Mammary epithelial cell (primary cell): ENCODE measurements at regions of chr19 and their contacts with region 1.

Region 1: GRCh38 chr19:39170395-39171231 is 26.2 kb upstream of the NCCRP1 start:
- DNase-seq: no peak
- H3K4me3 ChIP-seq: no peak overlapping the region
- H3K27ac ChIP-seq: no peak overlapping the region
- H3K4me1 ChIP-seq: peaks cover 19% of the 10 kb centered on the region
- H3K27me3 ChIP-seq: no peaks in the 10 kb centered on the region
- CTCF ChIP-seq: no peak

Region 2: DNA sequence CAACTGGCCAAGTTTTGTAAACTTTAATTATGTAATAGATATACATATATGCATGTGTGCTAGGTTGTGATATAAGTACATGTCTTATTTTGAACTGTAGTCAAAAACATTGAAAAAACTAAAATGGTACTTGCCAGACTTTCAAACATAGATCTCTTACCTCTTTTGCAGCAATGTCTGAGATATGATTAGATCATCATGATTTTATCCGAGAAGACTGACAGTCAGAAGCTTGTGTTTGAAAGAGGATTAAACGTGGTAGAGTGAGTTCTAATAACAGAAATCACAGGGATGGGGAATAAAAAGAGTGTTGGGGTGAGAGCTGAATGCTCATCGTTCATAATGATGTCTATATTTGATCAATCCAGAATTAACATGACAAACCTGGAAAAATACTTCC is 104.7 kb before region 1 on chr19:
- CTCF ChIA-PET with region 1: no interaction called
- dilution Hi-C with region 1: loop called (anchors 5 kb)
- in situ Hi-C with region 1: no loop called
- intact Hi-C with region 1: no loop called
- DNase-seq: no peak
- H3K4me3 ChIP-seq: no peak overlapping the region
- H3K27ac ChIP-seq: no peak overlapping the region
- H3K4me1 ChIP-seq: peaks cover 6% of the 10 kb centered on the region
- H3K27me3 ChIP-seq: no peaks in the 10 kb centered on the region
- CTCF ChIP-seq: no peak

Region 3: GRCh38 chr19:39125554-39126311 is 44.9 kb before region 1 on chr19 and contains the start of gene PAK4:
- CTCF ChIA-PET with region 1: no interaction called
- dilution Hi-C with region 1: loop called (anchors 5 kb)
- in situ Hi-C with region 1: no loop called
- intact Hi-C with region 1: no loop called
- DNase-seq: peak; percentile 97
- H3K4me3 ChIP-seq: peak within 1 kb of the TSS; percentile 64 to 86 (median 80)
- H3K27ac ChIP-seq: peak within 1 kb of the TSS; percentile 65
- H3K4me1 ChIP-seq: peaks cover 13% of the 10 kb centered on the region
- H3K27me3 ChIP-seq: no peaks in the 10 kb centered on the region
- CTCF ChIP-seq: no peak
- total RNA-seq, gene PAK4: 8.8 to 45.1 TPM

Region 4: DNA sequence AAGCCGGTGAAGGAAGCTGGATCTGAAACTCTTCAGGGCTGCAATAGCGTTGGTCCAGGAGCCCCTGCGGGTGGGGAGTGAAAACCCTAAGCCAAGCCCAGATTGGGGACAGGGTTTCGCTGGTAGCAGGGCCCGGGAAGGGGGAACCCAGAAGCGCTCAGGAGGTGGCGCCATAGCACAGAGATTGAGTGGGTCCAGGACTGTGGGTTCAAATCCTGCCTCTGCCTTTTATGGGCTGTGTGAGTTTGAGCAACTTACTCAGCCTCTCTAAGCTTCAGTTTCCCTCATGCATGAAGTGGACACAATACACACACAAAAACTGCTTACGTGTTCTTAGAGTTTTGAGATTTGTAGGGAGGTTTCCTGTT is 41.7 kb after region 1 on chr19:
- CTCF ChIA-PET with region 1: no interaction called
- dilution Hi-C with region 1: loop called (anchors 5 kb)
- in situ Hi-C with region 1: no loop called
- intact Hi-C with region 1: no loop called
- DNase-seq: no peak
- H3K4me3 ChIP-seq: no peak overlapping the region
- H3K27ac ChIP-seq: no peak overlapping the region
- H3K4me1 ChIP-seq: no peaks in the 10 kb centered on the region
- H3K27me3 ChIP-seq: no peaks in the 10 kb centered on the region
- CTCF ChIP-seq: peak in 1 of 2 donors; percentile 32